ENCODE measurements at regions of chr7 and their contacts with region 1.

Region 1: DNA sequence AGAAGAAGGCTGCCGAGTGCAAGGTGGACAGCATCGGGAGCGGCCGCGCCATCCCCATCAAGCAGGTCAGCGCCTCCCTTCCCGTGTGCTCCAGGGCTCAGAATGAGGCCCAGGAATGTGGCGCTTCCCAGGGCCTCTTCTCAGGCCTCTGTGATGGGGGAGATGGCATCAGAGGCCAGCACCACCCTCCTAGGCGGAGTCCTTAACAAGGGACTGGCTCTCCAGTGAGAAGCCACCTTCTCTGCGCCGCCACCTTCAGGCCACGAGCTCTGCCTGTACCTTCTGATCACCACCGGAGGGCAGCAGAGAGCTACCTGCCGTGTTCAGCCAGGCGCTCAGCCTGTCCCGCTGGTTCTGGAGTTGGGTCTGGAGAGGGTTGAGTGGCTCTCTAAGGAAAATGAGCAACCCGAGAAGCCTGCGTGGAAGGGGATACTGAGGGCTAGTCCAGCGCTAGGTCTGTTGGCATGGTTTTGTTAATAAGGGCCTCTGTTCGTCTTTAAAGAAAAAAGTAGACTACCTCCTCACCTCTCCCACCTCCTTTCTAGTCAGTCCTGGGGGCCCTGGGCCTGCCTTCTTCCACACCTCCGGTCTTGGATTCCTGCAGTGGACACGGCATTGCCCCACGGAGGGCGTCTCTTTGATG is 37.7 kb downstream of the AGAP3 start:
- DNase-seq: peak; percentile 90
- H3K4me3 Mint-ChIP-seq: no peak overlapping the region
- H3K27ac Mint-ChIP-seq: no peak overlapping the region
- H3K4me1 Mint-ChIP-seq: no peaks in the 10 kb centered on the region
- H3K27me3 Mint-ChIP-seq: no peaks in the 10 kb centered on the region
- CTCF ChIP-seq: peak; percentile 88

Region 2: DNA sequence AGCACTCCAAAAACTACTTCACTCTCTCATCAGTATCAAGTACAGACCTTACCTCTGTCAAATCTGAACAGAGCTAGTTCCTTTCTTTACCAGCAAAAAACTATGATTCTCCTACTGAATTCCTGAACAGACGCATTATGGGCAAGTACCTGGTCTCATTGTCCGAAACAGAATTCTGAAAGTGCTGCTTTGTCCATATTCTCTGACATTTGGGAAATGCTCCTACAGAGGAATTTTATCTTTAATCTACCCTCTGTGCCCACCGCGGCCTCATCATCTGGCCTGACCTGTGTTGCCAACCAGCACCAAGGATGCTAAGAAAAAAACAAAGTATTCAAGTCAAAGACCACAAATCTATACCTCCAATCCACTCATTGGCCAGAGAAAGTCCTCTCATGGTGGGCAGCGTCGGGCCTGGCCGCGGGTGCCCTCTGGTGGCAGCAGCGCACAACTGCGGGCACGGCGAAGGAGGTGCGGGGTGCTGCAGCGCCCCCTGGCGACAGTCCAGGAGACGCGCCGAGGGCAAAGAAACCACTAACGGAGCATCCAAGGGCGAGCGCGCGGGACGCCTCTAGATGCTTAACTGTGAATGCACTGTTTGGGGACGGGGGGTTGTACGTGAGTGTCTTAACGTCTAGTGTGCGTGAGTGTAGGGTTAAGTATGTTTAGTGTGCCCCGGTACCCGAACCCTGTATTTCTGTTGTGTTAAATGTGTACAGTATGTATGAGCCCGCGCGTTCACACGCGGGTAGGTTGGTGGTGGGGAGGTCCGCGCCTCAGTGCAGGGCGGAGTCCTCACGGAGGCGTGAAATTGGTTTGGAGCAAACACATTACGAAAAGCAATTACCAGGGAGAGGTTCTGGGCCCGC is 48.6 kb after region 1 on chr7:
- CTCF ChIA-PET with region 1: interaction called, 12 read pairs
- intact Hi-C with region 1: loop called (anchors 1 kb)
- DNase-seq: peak; percentile 79
- H3K4me3 Mint-ChIP-seq: no peak overlapping the region
- H3K27ac Mint-ChIP-seq: no peak overlapping the region
- H3K4me1 Mint-ChIP-seq: peaks cover 11% of the 10 kb centered on the region
- H3K27me3 Mint-ChIP-seq: peaks cover 98% of the 10 kb centered on the region
- CTCF ChIP-seq: peak; percentile 100

Region 3: GRCh38 chr7:151244196-151244840 is 120.4 kb after region 1 on chr7:
- CTCF ChIA-PET with region 1: interaction called, 3 read pairs
- intact Hi-C with region 1: loop called (anchors 5 kb)
- DNase-seq: peak; percentile 59
- H3K4me3 Mint-ChIP-seq: no peak overlapping the region
- H3K27ac Mint-ChIP-seq: no peak overlapping the region
- H3K4me1 Mint-ChIP-seq: peaks cover 15% of the 10 kb centered on the region
- H3K27me3 Mint-ChIP-seq: peaks cover 59% of the 10 kb centered on the region
- CTCF ChIP-seq: peak; percentile 74

Region 4: DNA sequence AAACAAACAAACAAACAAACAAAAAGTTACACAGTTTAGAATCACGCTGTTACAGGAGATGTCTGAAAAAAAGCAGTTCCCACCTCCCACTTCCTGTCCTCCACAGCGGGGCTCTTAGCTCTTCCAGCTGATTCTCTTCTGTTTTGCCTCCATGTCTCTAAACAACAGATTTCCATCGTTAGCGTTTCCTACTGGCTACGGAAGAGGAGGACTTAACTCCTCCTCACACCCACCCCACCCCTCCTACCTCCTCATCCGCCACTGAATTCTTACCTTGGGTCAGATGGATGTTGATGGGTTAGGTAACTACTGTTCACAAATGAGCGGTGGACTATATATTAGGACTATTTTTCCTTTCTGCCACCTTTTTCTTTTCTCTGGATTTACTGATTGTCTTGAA is 180.9 kb after region 1 on chr7:
- CTCF ChIA-PET with region 1: no interaction called
- intact Hi-C with region 1: loop called (anchors 5 kb)
- DNase-seq: no peak
- H3K4me3 Mint-ChIP-seq: no peak overlapping the region
- H3K27ac Mint-ChIP-seq: no peak overlapping the region
- H3K4me1 Mint-ChIP-seq: no peaks in the 10 kb centered on the region
- H3K27me3 Mint-ChIP-seq: peaks cover 85% of the 10 kb centered on the region
- CTCF ChIP-seq: no peak